IMR-90 (cell line): ENCODE measurements at regions of chr13 and their contacts with region 1.

Region 1: GRCh38 chr13:53151336-53152056 is 122.9 kb downstream of the OLFM4 start:
- DNase-seq: peak; percentile 34
- ATAC-seq: no peak; the same call in 1 of the 2 replicates
- H3K4me3 ChIP-seq: no peak overlapping the region
- H3K27ac ChIP-seq: no peak overlapping the region
- H3K4me1 ChIP-seq: no peaks in the 10 kb centered on the region
- H3K27me3 ChIP-seq: no peaks in the 10 kb centered on the region
- CTCF ChIP-seq: peak; percentile 62
- POLR2A ChIP-seq: no peak
- RAD21 ChIP-seq: peak; percentile 70

Region 2: GRCh38 chr13:52968074-52968700 is 183.3 kb before region 1 on chr13:
- CTCF ChIA-PET with region 1: interaction called, 28 read pairs
- POLR2A ChIA-PET with region 1: no interaction called
- dilution Hi-C with region 1: no loop called
- in situ Hi-C with region 1: no loop called
- intact Hi-C with region 1: loop called (anchors 2 kb)
- DNase-seq: peak; percentile 60
- ATAC-seq: peak; percentile 88
- H3K4me3 ChIP-seq: no peak overlapping the region
- H3K27ac ChIP-seq: no peak overlapping the region
- H3K4me1 ChIP-seq: no peaks in the 10 kb centered on the region
- H3K27me3 ChIP-seq: no peaks in the 10 kb centered on the region
- CTCF ChIP-seq: peak; percentile 99
- POLR2A ChIP-seq: no peak
- RAD21 ChIP-seq: peak; percentile 70

Region 3: DNA sequence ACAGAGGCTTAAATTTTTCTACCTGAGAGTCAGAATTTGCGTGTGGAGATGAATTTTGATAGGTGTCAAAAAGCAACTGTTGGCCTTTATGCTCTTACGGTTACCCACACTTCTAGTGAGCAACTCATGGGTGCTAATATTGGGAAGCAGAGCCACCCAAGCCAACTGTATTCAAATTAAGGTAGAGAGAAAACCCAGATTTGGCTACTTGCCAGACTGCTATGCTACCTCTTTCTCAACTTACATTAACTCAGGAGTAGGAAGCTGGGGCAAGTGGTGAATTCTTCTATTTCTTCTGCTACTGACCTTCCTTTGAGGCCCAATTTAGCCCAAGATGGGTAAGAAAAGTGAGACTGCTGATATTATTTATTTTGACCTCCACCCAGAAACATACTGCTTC is 39.0 kb before region 1 on chr13:
- CTCF ChIA-PET with region 1: no interaction called
- POLR2A ChIA-PET with region 1: no interaction called
- dilution Hi-C with region 1: no loop called
- in situ Hi-C with region 1: no loop called
- intact Hi-C with region 1: no loop called
- DNase-seq: no peak
- ATAC-seq: no peak
- H3K4me3 ChIP-seq: no peak overlapping the region
- H3K27ac ChIP-seq: no peak overlapping the region
- H3K4me1 ChIP-seq: no peaks in the 10 kb centered on the region
- H3K27me3 ChIP-seq: no peaks in the 10 kb centered on the region
- CTCF ChIP-seq: no peak
- POLR2A ChIP-seq: no peak
- RAD21 ChIP-seq: no peak

Region 4: GRCh38 chr13:53200498-53201453 is 49.3 kb after region 1 on chr13:
- CTCF ChIA-PET with region 1: no interaction called
- POLR2A ChIA-PET with region 1: no interaction called
- dilution Hi-C with region 1: no loop called
- in situ Hi-C with region 1: no loop called
- intact Hi-C with region 1: no loop called
- DNase-seq: peak; percentile 1
- ATAC-seq: peak; percentile 29; the same call in 1 of the 2 replicates
- H3K4me3 ChIP-seq: no peak overlapping the region
- H3K27ac ChIP-seq: no peak overlapping the region
- H3K4me1 ChIP-seq: no peaks in the 10 kb centered on the region
- H3K27me3 ChIP-seq: no peaks in the 10 kb centered on the region
- CTCF ChIP-seq: peak; percentile 46
- POLR2A ChIP-seq: no peak
- RAD21 ChIP-seq: peak; percentile 32; the same call in 1 of the 2 replicates